ENCODE measurements at regions of chr7 and their contacts with region 1.

Region 1: DNA sequence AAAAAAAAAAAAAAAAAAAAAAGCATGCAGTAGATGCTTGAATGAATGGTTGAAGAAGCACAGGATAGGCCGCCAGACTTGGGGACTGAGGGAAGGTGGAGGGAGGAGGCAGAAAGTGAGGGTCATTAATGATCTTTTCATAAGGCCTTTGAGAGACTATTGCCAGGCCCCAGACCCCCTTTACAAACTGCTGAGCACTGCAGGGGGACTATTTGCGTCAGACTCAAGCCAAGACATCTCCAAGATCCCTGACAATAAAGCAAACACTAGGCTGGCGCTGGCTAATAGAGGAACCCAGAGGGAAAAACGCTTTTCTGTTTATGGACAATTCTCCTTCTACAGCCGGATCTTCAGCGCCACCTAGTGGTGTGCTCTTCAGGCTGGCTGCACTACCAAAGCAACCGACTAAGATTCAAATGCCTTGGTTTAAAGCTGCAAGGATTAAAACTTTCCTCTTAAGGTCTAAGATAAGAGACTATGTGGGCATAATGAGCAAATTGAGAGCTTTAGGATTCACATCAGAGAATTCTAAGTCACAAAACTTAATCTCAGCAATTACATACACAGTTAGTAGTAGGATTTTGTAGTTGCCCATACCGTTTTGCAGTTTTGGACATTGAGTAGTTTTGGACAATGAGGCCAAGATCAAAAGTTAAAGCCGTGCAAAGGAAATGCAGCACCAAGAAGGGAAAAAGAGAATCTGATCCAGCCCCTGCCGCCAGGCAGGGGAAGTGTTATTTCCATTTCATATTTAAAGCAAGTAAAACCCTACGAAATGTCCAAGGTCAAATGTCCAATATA is 17.9 kb upstream of the AGK start:
- DNase-seq: peak; percentile 50 to 87
- ATAC-seq: peak; percentile 72 to 83 (median 72)
- H3K4me3 ChIP-seq: no peak overlapping the region
- H3K4me3 Mint-ChIP-seq: no peak overlapping the region
- H3K27ac ChIP-seq: no peak overlapping the region
- H3K27ac Mint-ChIP-seq: no peak overlapping the region
- H3K4me1 ChIP-seq: peaks cover 3% of the 10 kb centered on the region
- H3K4me1 Mint-ChIP-seq: peaks cover 0 to 6% of the 10 kb centered on the region in 2 donors
- H3K27me3 ChIP-seq: no peaks in the 10 kb centered on the region
- H3K27me3 Mint-ChIP-seq: peaks cover 6 to 11% of the 10 kb centered on the region in 2 donors
- CTCF ChIP-seq: peak; percentile 95

Region 2: GRCh38 chr7:140517546-140518369 is 1015.6 kb before region 1 on chr7:
- intact Hi-C with region 1: loop called (anchors 5 kb)
- DNase-seq: peak; percentile 34 to 75
- ATAC-seq: peak; percentile 44 to 72 (median 53)
- H3K4me3 ChIP-seq: no peak overlapping the region
- H3K4me3 Mint-ChIP-seq: no peak overlapping the region
- H3K27ac ChIP-seq: no peak overlapping the region
- H3K27ac Mint-ChIP-seq: no peak overlapping the region
- H3K4me1 ChIP-seq: peaks cover 3% of the 10 kb centered on the region
- H3K4me1 Mint-ChIP-seq: peaks cover 0 to 11% of the 10 kb centered on the region in 2 donors
- H3K27me3 ChIP-seq: no peaks in the 10 kb centered on the region
- H3K27me3 Mint-ChIP-seq: peaks cover 0 to 2% of the 10 kb centered on the region in 2 donors
- CTCF ChIP-seq: peak; percentile 50

Region 3: DNA sequence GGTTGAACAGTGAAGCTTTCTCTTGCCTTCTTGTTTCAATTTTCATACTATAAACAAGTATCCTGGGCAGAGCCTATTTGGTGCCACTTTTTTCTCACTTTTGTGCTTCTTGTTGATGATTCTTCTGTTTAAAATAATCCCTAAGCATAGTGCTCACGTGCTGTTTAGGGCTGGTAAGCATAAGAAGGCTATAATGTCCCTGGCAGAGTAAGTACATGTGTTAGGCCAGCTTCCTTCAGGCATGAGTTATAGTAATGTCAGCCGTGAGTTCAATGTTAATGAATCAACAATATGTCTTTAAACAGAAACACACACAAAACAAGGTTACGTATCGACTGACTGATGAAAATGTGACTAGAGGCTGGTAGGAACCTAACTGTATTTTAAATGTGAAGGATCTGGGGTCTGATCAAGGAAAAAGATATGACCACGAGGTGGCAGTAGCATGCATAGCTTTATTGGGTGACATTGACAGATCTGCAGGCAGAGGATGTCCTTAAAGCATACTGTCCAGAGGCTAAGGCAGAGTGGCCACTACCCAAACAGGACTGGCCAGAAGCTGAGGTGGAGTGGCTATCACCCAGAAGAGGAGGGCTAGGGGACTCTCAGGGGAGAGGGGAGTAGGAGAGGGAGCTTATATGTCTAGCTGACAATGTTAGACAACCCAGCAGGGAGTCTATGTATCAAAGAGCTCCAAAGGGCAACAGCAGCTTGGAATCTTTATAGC is 722.4 kb before region 1 on chr7:
- intact Hi-C with region 1: loop called (anchors 5 kb)
- DNase-seq: peak; percentile 35 to 85
- ATAC-seq: peak; percentile 83 to 88 (median 88)
- H3K4me3 ChIP-seq: no peak overlapping the region
- H3K4me3 Mint-ChIP-seq: no peak overlapping the region
- H3K27ac ChIP-seq: no peak overlapping the region
- H3K27ac Mint-ChIP-seq: peak overlapping the region in 1 of 2 donors; percentile 16
- H3K4me1 ChIP-seq: no peaks in the 10 kb centered on the region
- H3K4me1 Mint-ChIP-seq: peaks cover 5 to 6% of the 10 kb centered on the region in 2 donors
- H3K27me3 ChIP-seq: no peaks in the 10 kb centered on the region
- H3K27me3 Mint-ChIP-seq: no peaks in the 10 kb centered on the region
- CTCF ChIP-seq: peak; percentile 76

Measured in natural killer cell (primary cell).